A673 (cell line): ENCODE measurements at regions of chr2 and their contacts with region 1.

Region 1: DNA sequence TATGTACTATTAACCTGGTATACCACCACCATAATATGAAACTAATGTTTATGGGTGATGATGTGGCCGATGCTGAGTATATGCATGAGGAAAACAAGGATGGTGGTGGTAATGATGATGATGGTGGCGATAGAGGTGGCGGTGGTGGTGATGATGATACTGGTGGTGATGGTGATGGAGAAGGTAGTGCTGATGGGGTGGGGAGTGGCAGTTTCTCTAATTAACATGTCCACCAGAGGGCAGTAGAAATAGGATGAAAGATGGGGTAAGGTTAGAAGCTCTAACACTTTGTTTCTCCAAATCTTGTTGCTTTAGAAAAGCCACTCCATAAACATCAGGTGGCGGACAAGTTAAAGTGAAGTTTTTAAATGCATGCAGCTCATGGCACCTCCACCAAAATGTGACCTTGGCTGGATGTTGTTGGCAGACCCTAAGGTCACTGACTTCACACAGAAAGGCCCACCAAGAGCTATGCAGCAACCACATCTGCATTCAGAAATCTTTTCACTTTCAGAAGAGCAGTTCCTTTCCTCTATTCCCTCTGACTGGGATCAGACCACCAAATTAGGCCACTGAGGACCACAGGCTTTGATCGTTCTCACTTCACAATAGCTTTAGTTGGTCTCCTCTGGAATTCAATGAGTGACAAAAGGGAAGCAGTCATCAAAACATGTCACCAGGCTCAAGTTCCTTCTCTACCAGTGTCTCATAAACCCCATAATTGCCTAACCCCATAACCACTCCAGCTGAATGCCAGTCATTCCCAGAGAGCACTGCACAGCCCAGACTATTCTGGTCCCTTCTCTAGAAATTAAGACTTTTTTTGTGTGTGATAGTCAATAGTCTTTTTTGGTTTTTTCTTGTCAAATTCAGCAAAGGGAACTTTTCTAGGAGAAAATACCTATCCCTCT is 7.5 kb upstream of the BCL11A start:
- DNase-seq: peak; percentile 56
- H3K4me3 ChIP-seq: no peak overlapping the region
- H3K27ac ChIP-seq: no peak overlapping the region
- H3K4me1 ChIP-seq: peaks cover 9% of the 10 kb centered on the region
- H3K27me3 ChIP-seq: peaks cover 92% of the 10 kb centered on the region
- CTCF ChIP-seq: peak; percentile 66

Region 2: GRCh38 chr2:59993726-59994125 is 567.3 kb before region 1 on chr2:
- CTCF ChIA-PET with region 1: no interaction called
- POLR2A ChIA-PET with region 1: no interaction called
- intact Hi-C with region 1: no loop called
- DNase-seq: no peak
- H3K4me3 ChIP-seq: no peak overlapping the region
- H3K27ac ChIP-seq: no peak overlapping the region
- H3K4me1 ChIP-seq: no peaks in the 10 kb centered on the region
- H3K27me3 ChIP-seq: peaks cover 12% of the 10 kb centered on the region
- CTCF ChIP-seq: no peak

Region 3: DNA sequence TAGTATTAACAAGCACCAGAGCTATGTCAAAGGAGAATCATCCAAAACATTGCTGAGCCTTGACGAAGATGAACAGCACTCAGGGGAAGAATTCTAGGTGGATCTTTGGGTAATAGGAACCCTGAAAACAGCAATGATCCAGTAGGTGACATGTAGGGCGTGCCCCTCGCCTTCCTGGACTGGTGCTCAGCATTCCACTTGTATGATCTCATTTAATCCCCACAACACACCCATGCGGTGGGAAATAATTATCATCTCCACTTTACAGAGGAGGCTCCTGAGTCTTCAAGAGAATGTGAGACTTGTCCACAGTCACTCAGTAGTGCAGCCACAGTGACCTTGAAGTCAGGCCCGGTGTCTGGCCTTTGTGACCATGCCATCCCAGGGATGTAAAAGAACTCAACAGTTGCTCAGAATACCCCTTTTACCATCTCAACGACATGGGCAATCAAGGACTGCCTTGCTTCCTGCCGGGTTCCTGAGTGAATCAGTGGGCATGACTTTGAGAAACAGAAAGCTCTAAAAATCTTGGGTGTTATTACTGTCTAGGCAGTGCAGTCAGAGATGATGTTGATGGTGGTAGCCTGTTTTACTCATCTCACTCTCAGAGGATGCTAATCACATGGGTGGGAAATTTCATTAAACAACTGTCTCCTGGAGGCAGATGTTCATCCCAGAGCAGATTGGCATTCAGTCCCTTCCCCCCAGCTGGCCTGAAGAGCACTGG is 169.2 kb before region 1 on chr2:
- CTCF ChIA-PET with region 1: no interaction called
- POLR2A ChIA-PET with region 1: no interaction called
- intact Hi-C with region 1: no loop called
- DNase-seq: no peak
- H3K4me3 ChIP-seq: no peak overlapping the region
- H3K27ac ChIP-seq: no peak overlapping the region
- H3K4me1 ChIP-seq: no peaks in the 10 kb centered on the region
- H3K27me3 ChIP-seq: peaks cover 57% of the 10 kb centered on the region
- CTCF ChIP-seq: no peak

Region 4: GRCh38 chr2:60581433-60582282 is 20.7 kb after region 1 on chr2:
- CTCF ChIA-PET with region 1: interaction called, 10 read pairs
- POLR2A ChIA-PET with region 1: interaction called, 3 read pairs
- intact Hi-C with region 1: no loop called
- DNase-seq: peak; percentile 76
- H3K4me3 ChIP-seq: peak overlapping the region; percentile 43
- H3K27ac ChIP-seq: no peak overlapping the region
- H3K4me1 ChIP-seq: peaks cover 8% of the 10 kb centered on the region
- H3K27me3 ChIP-seq: peaks cover 23% of the 10 kb centered on the region
- CTCF ChIP-seq: peak; percentile 87

Region 5: GRCh38 chr2:60674524-60675165 is 113.7 kb after region 1 on chr2:
- CTCF ChIA-PET with region 1: no interaction called
- POLR2A ChIA-PET with region 1: no interaction called
- intact Hi-C with region 1: loop called (anchors 5 kb)
- DNase-seq: peak; percentile 83
- H3K4me3 ChIP-seq: no peak overlapping the region
- H3K27ac ChIP-seq: no peak overlapping the region
- H3K4me1 ChIP-seq: no peaks in the 10 kb centered on the region
- H3K27me3 ChIP-seq: no peaks in the 10 kb centered on the region
- CTCF ChIP-seq: peak; percentile 96

Region 6: DNA sequence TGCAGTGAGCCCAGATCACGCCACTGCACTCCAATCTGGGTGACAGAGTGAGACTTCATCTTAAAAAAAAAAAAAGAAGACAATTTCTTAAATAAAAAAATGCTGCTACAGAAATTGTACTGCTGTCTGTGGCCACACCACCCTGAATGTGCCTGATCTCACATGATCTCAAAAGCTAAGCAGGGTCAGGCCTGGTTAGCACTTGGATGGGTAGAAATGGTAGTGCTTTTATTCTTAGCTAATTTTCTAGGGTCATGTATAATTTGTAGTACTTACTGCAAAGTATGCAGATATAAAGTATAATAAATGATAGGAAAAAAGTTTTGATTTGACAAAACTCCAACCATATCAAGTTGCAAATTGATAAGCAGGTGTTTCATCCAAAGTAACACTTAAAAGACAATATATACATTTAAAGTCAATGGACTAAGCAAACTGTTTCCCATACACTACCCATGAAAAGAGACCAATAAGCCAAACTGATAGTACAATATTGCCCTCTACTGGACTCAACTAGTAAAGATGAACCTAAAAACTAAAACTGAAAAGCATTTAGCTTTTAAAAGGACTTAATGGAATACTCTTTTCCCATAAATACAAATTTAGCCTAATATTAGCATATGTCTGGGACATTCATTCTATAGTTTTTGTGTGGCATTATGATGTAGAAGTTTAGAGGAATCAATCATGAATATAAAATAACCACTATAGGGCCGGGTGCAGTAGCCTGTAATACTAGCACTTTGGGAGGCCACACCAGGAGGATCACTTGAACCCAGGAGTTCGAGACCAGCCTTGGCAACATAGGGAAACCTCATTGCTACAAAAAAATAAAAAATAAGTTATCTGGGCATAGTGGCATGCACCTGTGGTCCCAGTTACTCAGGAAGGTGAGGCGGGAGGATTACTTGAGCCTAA is 437.9 kb after region 1 on chr2:
- CTCF ChIA-PET with region 1: interaction called, 4 read pairs
- POLR2A ChIA-PET with region 1: no interaction called
- intact Hi-C with region 1: loop called (anchors 5 kb)
- DNase-seq: peak; percentile 69
- H3K4me3 ChIP-seq: no peak overlapping the region
- H3K27ac ChIP-seq: no peak overlapping the region
- H3K4me1 ChIP-seq: no peaks in the 10 kb centered on the region
- H3K27me3 ChIP-seq: no peaks in the 10 kb centered on the region
- CTCF ChIP-seq: peak; percentile 73

Region 7: DNA sequence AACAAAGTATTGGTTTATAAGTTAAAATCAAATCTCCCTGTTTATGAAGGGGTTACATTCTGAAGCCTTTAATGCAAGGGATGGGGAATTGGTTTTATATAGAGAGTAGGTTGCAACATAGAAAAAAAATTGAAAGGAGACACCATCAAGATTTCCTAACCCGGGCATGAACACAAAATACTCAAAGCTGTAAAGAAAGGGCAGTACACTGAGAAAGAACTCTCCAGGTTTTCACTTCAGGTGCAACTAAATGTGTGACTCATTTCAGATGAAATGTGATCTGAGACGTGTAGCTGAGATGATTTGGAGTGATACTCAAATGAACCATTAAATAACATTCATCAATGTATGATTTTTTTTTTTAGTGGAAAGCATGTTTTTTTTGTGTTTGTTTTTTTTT is 548.3 kb after region 1 on chr2:
- CTCF ChIA-PET with region 1: no interaction called
- POLR2A ChIA-PET with region 1: no interaction called
- intact Hi-C with region 1: no loop called
- DNase-seq: no peak
- H3K4me3 ChIP-seq: no peak overlapping the region
- H3K27ac ChIP-seq: no peak overlapping the region
- H3K4me1 ChIP-seq: no peaks in the 10 kb centered on the region
- H3K27me3 ChIP-seq: no peaks in the 10 kb centered on the region
- CTCF ChIP-seq: no peak